HAP-1 (cell line): ENCODE measurements at regions of chr2 and their contacts with region 1.

Region 1: DNA sequence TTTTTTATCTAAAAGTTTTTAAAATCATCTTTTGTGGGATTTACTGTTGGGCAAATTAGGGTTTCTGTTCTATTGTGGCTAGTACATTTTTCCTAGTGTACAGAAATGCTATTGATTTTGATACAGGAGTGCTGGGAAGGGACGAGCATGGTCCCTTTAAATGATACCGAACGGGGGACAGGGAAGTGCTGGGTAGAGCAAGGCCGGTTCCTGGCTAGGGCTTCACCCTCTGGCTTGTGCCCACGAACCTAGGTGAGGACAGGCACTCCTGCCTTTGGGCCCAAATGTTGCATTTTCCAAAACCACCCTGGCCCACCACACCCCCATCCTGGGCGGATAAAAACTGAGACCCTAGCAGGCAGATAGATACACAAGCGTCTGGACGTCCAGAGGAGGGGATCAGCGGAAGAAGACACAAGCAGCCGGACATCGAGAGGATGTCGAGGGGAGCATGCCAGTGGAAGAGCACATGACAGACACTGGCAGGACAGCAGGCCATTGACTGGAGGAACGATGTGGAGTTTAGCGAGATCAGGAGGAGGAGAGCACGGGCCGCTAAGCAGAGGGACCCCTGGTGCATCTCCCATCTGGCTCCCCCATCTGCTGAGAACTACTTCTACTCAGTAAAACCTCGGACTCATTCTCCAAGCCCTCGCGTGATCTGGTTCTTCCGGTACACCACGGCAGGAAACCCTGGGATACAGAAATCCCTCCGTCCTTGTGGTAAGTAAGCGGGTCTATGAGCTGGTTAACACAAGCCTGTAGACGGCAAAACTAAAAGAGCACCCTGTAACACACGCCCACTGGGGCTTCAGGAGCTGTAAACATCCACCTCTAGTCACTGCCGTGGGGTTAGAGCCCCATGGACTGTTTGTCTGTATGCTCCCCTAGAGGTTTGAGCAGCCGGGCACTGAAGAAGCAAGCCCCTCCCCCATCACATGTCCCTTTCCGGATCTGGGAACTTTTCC is 13.5 kb upstream of the CALCRL start:
- DNase-seq: no peak
- H3K4me3 ChIP-seq: no peak overlapping the region
- H3K4me1 ChIP-seq: no peaks in the 10 kb centered on the region
- H3K27me3 ChIP-seq: no peaks in the 10 kb centered on the region

Region 2: DNA sequence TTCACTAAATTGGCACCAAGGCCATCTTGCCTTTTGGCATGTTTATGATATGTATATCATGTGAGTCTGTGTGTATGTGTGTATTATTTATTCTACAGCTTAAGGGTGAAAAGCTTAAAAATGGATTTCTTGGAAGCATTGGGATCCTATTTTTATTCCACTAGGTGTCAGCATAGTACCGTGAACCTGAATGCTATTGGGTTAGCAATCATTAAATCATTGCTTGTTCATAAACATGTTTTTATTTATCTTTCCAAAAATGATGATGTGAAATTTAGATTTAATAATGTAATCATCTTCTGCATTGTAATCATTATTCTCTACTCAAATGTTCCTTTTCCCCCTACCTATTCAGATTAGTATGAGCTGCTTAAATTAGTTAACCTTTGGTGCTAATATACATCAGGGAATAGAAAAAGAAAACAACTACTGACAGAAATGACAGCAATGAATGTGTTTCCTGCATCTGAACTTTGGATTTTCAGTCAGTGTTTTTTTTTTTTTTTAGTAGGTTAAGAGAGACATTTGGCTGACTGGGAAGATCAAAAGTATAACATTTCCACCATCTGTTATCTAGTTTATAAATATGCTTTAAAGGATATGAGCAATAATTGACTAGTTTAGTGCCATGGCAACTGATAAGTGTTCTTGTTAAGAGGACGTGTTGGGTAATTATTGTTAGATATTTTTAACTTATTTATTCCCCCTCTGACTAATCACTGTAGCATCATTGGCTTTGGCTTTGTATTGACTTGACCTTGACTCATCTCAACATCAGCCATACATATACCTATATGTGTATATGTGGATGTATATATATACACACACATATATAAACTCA is 598.5 kb before region 1 on chr2:
- in situ Hi-C with region 1: loop called (anchors 10 kb)
- DNase-seq: peak in 1 of 2 experiments; percentile 24
- H3K4me3 ChIP-seq: no peak overlapping the region
- H3K4me1 ChIP-seq: no peaks in the 10 kb centered on the region
- H3K27me3 ChIP-seq: no peaks in the 10 kb centered on the region